Natural killer cell (primary cell): ENCODE measurements at regions of chr5 and their contacts with region 1.

Region 1: DNA sequence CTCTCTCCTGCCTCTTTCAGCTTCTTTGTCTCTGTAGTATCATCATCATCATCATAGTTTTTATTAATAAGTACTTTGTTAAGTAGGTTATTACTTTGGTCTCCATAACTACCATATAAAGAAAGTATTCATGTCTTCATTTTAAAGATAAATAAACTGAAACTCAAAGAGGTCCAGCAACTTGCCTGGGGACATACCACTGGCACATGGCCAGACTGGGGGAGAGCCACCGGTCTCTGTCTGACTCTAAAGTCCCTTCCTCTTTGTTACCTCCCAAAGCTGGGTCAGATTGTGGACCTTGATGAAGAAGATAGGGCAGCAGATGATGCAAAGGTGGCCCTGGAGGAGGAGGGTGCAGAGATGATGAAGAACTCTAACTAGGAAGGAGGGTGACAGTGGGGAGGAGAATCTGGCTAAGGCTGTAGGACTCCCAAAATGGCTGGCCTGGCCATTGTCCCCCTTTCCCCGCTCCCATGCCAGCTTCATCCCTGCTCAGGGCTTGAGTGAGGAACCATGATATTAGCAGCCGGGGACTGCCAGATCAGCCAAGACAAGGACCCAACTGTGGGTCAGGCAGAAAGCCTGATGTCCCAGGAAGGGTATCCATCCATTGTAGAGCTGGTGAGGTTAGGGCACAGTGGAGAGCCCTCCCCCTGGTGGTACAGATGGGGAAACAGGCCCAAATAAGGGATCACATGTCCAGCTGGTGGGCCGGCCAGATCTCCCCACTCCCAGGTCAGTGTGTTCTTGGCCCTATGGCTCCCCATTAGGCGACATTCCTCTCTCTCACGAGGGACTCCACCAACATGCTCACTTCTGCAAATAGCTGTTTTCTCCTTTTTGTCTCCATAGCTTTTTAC is 8.7 kb downstream of the CDX1 start:
- DNase-seq: peak in 1 of 2 donors; percentile 11
- ATAC-seq: peak in 2 of 3 donors; percentile 65 to 68
- H3K4me3 ChIP-seq: no peak overlapping the region
- H3K4me3 Mint-ChIP-seq: no peak overlapping the region
- H3K27ac ChIP-seq: no peak overlapping the region
- H3K27ac Mint-ChIP-seq: no peak overlapping the region
- H3K4me1 ChIP-seq: no peaks in the 10 kb centered on the region
- H3K4me1 Mint-ChIP-seq: no peaks in the 10 kb centered on the region
- H3K27me3 ChIP-seq: no peaks in the 10 kb centered on the region
- H3K27me3 Mint-ChIP-seq: peaks cover 17 to 28% of the 10 kb centered on the region in 2 donors
- CTCF ChIP-seq: no peak

Region 2: DNA sequence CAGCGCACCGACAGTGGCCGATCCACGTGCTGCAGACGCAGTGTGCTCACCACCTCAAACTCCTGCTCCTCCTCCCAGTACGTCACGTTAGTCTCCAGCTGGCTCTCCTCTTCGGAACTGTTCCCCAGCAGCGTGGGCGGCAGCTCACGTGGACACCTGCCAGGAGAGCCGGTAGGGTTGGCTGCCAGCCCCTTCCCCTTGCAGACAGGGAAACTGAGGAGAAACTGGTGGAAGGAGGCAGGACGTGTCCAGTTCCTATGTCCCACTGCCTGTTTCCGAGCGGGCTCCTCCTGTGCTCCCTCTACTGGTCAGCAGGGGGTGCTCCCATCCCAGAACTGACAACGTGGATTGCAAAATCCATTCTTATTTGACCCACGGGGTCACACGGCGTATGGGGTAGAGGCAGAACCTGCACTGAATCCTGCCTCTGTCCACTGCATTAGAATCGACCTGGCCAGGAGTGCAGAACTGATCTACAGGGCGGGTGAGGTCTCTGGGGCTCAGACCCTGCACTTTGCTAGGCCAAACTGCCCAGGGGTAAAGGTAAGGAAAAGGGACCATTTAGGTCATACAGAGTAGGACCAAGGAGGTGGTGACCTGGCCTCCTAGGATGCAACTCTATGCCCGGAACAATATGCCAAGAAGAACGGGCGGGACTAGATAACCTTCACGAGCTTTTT is 45.4 kb before region 1 on chr5:
- intact Hi-C with region 1: loop called (anchors 2 kb)
- DNase-seq: peak; percentile 53 to 60
- ATAC-seq: peak; percentile 62 to 89 (median 79)
- H3K4me3 ChIP-seq: no peak overlapping the region
- H3K4me3 Mint-ChIP-seq: peak overlapping the region; percentile 62
- H3K27ac ChIP-seq: no peak overlapping the region
- H3K27ac Mint-ChIP-seq: peak overlapping the region; percentile 45 to 74
- H3K4me1 ChIP-seq: peaks cover 27% of the 10 kb centered on the region
- H3K4me1 Mint-ChIP-seq: peaks cover 21 to 43% of the 10 kb centered on the region in 2 donors
- H3K27me3 ChIP-seq: no peaks in the 10 kb centered on the region
- H3K27me3 Mint-ChIP-seq: peaks cover 0 to 3% of the 10 kb centered on the region in 2 donors
- CTCF ChIP-seq: peak; percentile 81